Psoas muscle (tissue), 8 donors: ENCODE measurements at regions of chr11 and their contacts with region 1.

Region 1: DNA sequence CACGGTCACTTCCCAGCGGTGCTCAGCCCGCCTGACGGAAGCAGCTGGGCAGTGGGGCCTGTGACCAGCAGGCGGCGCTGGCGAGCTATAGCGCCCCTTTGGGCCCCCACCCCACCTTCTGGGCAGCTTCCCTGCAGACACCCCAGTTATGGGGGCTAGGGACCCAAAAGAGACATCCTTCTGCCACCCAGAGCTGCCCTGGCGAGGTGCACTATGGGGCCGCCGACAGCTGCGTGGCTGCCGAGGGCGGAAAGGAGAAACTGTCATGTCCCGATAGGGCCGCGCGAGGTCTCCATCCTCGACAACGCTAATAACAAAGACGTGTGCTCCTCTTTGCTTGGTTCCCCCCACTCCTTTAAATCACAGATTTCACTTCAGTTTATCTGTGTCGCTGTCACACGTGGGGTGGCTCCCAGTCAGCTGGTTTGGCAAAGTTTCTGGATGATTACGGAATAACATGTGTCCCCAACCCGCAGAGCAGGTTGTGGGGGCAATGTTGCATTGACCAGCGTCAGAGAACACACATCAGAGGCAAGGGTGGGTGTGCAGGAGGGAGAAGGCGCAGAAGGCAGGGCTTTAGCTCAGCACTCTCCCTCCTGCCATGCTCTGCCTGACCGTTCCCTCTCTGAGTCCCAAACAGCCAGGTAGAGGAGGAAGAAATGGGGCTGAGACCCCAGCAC is 674 bp upstream of the MYO7A start:
- DNase-seq: peak; percentile 59 to 76
- ATAC-seq: peak; percentile 64 to 84 (median 73)
- H3K4me3 ChIP-seq: peak overlapping the region; percentile 62
- H3K27ac ChIP-seq: no peak overlapping the region
- H3K4me1 ChIP-seq: peaks cover 10% of the 10 kb centered on the region
- H3K27me3 ChIP-seq: no peaks in the 10 kb centered on the region
- CTCF ChIP-seq: peak; percentile 96

Region 2: GRCh38 chr11:77149716-77150392 is 22.5 kb after region 1 on chr11:
- intact Hi-C with region 1: loop called in 1 of 2 experiments (anchors 1 kb)
- DNase-seq: no peak
- ATAC-seq: no peak
- H3K4me3 ChIP-seq: no peak overlapping the region
- H3K27ac ChIP-seq: no peak overlapping the region
- H3K4me1 ChIP-seq: peaks cover 6% of the 10 kb centered on the region
- H3K27me3 ChIP-seq: no peaks in the 10 kb centered on the region
- CTCF ChIP-seq: no peak

Region 3: GRCh38 chr11:77187776-77188632 is 60.6 kb after region 1 on chr11:
- intact Hi-C with region 1: loop called (anchors 1 to 5 kb)
- DNase-seq: peak; percentile 82 to 89
- ATAC-seq: peak; percentile 87 to 96 (median 92)
- H3K4me3 ChIP-seq: no peak overlapping the region
- H3K27ac ChIP-seq: no peak overlapping the region
- H3K4me1 ChIP-seq: no peaks in the 10 kb centered on the region
- H3K27me3 ChIP-seq: no peaks in the 10 kb centered on the region
- CTCF ChIP-seq: peak; percentile 91

Region 4: GRCh38 chr11:77547863-77548551 is 420.6 kb after region 1 on chr11:
- intact Hi-C with region 1: loop called (anchors 5 kb)
- DNase-seq: no peak
- ATAC-seq: peak; percentile 44 to 84 (median 64)
- H3K4me3 ChIP-seq: no peak overlapping the region
- H3K27ac ChIP-seq: no peak overlapping the region
- H3K4me1 ChIP-seq: no peaks in the 10 kb centered on the region
- H3K27me3 ChIP-seq: no peaks in the 10 kb centered on the region
- CTCF ChIP-seq: peak; percentile 71